ENCODE measurements at regions of chr3 and their contacts with region 1.

Region 1: DNA sequence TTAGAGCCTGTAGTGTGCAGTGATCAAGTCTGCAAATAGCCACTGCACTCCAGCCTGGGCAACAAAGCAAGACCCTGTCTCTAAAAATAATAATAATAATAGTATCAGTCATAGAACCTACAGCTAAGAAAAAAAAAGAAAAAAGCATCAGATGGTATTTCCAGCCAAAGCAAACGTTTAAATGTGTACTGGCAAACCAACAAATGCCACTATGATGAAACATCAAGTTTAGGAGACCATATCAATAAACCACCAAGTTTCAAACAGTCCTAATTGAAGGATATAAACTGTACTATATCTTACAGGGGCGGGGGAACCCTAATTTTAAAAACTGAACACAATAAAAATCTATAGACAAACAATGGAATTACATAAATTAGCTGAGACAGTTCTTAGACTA is 6.4 kb downstream of the UBP1 start:
- DNase-seq: no peak
- ATAC-seq: no peak
- H3K4me3 ChIP-seq: no peak overlapping the region
- H3K4me3 Mint-ChIP-seq: peak overlapping the region in 2 of 3 donors; percentile 13 to 28
- H3K27ac ChIP-seq: no peak overlapping the region
- H3K27ac Mint-ChIP-seq: no peak overlapping the region
- H3K4me1 ChIP-seq: peaks cover 24 to 39% of the 10 kb centered on the region in 2 experiments
- H3K4me1 Mint-ChIP-seq: peaks cover 85 to 89% (median 88%) of the 10 kb centered on the region in 3 donors
- H3K27me3 ChIP-seq: no peaks in the 10 kb centered on the region
- H3K27me3 Mint-ChIP-seq: no peaks in the 10 kb centered on the region

Region 2: GRCh38 chr3:33417066-33417673 is 16.7 kb before region 1 on chr3:
- CTCF ChIA-PET with region 1: interaction called in 1 of 2 experiments, 4 read pairs
- POLR2A ChIA-PET with region 1: interaction called, 6 to 10 read pairs
- DNase-seq: no peak
- ATAC-seq: no peak
- H3K4me3 ChIP-seq: no peak overlapping the region
- H3K4me3 Mint-ChIP-seq: no peak overlapping the region
- H3K27ac ChIP-seq: no peak overlapping the region
- H3K27ac Mint-ChIP-seq: no peak overlapping the region
- H3K4me1 ChIP-seq: no peaks in the 10 kb centered on the region
- H3K4me1 Mint-ChIP-seq: peaks cover 0 to 18% (median 14%) of the 10 kb centered on the region in 3 donors
- H3K27me3 ChIP-seq: no peaks in the 10 kb centered on the region
- H3K27me3 Mint-ChIP-seq: no peaks in the 10 kb centered on the region

Region 3: GRCh38 chr3:33629219-33629618 is 195.4 kb after region 1 on chr3:
- CTCF ChIA-PET with region 1: no interaction called
- POLR2A ChIA-PET with region 1: no interaction called
- DNase-seq: no peak
- ATAC-seq: no peak
- H3K4me3 ChIP-seq: no peak overlapping the region
- H3K4me3 Mint-ChIP-seq: no peak overlapping the region
- H3K27ac ChIP-seq: no peak overlapping the region
- H3K27ac Mint-ChIP-seq: no peak overlapping the region
- H3K4me1 ChIP-seq: no peaks in the 10 kb centered on the region
- H3K4me1 Mint-ChIP-seq: no peaks in the 10 kb centered on the region
- H3K27me3 ChIP-seq: no peaks in the 10 kb centered on the region
- H3K27me3 Mint-ChIP-seq: no peaks in the 10 kb centered on the region

Region 4: GRCh38 chr3:33980252-33980651 is 546.4 kb after region 1 on chr3:
- CTCF ChIA-PET with region 1: no interaction called
- POLR2A ChIA-PET with region 1: no interaction called
- DNase-seq: peak in 1 of 35 experiments; percentile 8
- ATAC-seq: no peak
- H3K4me3 ChIP-seq: no peak overlapping the region
- H3K4me3 Mint-ChIP-seq: no peak overlapping the region
- H3K27ac ChIP-seq: no peak overlapping the region
- H3K27ac Mint-ChIP-seq: no peak overlapping the region
- H3K4me1 ChIP-seq: no peaks in the 10 kb centered on the region
- H3K4me1 Mint-ChIP-seq: peaks cover 0 to 7% (median 0%) of the 10 kb centered on the region in 3 donors
- H3K27me3 ChIP-seq: no peaks in the 10 kb centered on the region
- H3K27me3 Mint-ChIP-seq: no peaks in the 10 kb centered on the region